Activated naive CD4-positive, alpha-beta T cell treated with anti-CD3 and anti-CD28 coated beads for 36 hours (primary cell): ENCODE measurements at regions of chr2 and their contacts with region 1.

Region 1: DNA sequence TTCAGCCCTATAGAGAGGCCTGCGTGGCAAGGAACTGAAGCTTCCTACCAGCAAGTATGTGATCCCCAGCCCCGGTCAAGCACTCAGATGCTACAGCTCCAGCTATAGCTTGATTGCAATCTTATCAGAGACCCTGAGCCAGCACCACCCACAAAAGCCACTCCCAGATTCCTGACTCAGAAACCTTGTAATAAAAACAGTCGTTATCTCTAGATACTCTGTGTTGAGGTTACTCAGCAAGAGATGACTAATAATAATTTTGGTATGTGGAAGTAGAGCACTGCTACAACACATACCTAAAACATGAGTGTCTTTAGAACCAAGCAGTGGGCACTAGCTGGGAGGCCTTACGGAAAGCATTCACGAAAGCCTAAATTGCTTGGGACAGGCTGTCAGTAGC is 216.9 kb downstream of the UXS1 start:
- DNase-seq: peak; percentile 43
- H3K4me3 Mint-ChIP-seq: no peak overlapping the region
- H3K27ac Mint-ChIP-seq: peak overlapping the region; percentile 33
- H3K4me1 Mint-ChIP-seq: peaks cover 38% of the 10 kb centered on the region
- H3K27me3 Mint-ChIP-seq: no peaks in the 10 kb centered on the region

Region 2: GRCh38 chr2:105934467-105934866 is 42.7 kb before region 1 on chr2:
- CTCF ChIA-PET with region 1: no interaction called
- intact Hi-C with region 1: loop called (anchors 2 kb)
- DNase-seq: peak; percentile 61
- H3K4me3 Mint-ChIP-seq: peak overlapping the region; percentile 20
- H3K27ac Mint-ChIP-seq: no peak overlapping the region
- H3K4me1 Mint-ChIP-seq: peaks cover 28% of the 10 kb centered on the region
- H3K27me3 Mint-ChIP-seq: no peaks in the 10 kb centered on the region

Region 3: GRCh38 chr2:106208874-106209273 is 231.7 kb after region 1 on chr2:
- CTCF ChIA-PET with region 1: no interaction called
- intact Hi-C with region 1: no loop called
- DNase-seq: no peak
- H3K4me3 Mint-ChIP-seq: no peak overlapping the region
- H3K27ac Mint-ChIP-seq: no peak overlapping the region
- H3K4me1 Mint-ChIP-seq: peaks cover 3% of the 10 kb centered on the region
- H3K27me3 Mint-ChIP-seq: no peaks in the 10 kb centered on the region

Region 4: DNA sequence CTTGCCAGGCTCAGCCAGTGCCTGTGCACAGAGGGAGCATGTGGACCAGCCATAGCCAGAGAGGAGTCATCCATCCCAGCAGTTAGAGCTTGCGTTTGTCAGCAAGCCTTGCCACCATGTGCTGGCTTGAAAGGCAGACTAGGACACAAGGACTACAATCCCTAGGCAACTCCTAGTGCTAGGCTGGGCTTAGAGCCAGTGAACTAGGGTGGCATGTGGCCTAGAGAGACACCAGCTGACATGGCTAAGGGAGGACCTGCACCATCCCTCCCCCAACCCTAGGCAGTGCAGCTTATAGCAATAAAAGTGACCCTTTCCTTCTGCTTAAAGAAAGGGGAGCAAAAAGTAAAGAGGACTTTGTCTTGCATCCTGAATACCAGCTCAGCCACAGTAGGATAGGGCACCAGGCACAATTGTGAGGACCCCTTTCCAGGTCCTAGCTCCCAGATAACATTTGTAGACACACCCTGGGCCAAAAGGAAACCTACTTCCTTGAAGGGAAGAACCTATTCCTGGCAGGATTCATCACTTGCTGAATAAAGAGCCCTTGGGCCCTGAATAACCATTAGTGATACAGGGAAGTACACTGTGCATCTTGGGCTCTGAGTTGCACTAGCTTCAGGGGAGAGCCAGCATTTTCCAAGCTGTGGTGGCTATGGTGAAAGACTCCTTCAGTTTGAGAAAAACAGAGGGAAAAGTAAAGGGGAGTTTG is 255.6 kb after region 1 on chr2:
- CTCF ChIA-PET with region 1: no interaction called
- intact Hi-C with region 1: no loop called
- DNase-seq: no peak
- H3K4me3 Mint-ChIP-seq: no peak overlapping the region
- H3K27ac Mint-ChIP-seq: no peak overlapping the region
- H3K4me1 Mint-ChIP-seq: no peaks in the 10 kb centered on the region
- H3K27me3 Mint-ChIP-seq: no peaks in the 10 kb centered on the region